Common myeloid progenitor, CD34-positive (primary cell): ENCODE measurements at regions of chr14 and their contacts with region 1.

Region 1: DNA sequence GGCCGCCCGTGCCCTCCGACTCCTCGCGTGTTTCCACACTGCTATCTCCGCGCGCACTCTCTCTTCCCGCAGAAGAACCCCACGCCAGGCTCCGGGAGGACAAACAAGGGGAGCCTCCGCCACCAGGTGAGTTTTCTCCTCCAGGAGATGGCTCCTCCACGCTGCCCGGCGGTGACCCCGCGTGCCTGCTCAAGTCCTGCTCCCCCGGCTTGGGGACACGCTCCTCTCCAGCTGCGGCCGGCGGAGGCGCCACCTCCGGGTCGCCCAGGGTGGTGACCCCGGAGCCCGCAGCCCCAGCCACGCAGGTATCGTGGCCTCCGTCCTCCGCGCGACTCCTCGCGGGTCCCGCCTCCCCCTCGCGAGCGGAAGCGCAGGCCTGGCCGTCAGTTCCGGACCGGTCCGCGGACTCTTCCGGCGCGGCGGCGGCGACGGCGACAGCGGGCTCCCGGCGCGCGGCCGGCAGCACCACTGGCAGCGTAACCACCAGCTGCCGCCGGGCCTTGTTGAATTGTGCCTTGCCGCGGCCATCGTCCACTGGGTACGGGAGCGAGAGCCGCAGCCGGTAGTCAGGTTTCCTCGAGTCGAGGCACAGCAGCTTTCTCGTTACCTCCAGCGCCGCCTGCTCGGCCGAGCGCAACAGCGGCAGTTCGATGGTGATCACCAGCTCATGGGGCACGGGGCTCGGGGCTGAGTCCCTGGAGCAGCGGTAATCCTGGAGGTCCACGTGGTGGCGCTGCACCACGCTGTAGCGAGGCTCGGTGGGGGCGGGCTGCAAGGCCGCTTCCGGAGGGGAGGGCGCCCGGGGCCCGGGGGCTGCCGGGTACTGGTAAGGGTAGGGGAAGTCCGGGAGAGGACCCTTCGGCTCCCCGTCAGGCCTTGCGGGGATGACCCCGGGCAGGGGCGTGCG is 1.2 kb downstream of the DNAAF2 start:
- DNase-seq: peak; percentile 96 to 98 (median 98)
- H3K4me3 ChIP-seq: peak overlapping the region; percentile 53 to 98 (median 95)
- H3K27ac ChIP-seq: peak overlapping the region; percentile 90 to 96
- H3K4me1 ChIP-seq: peaks cover 8 to 29% (median 24%) of the 10 kb centered on the region in 4 experiments
- H3K27me3 ChIP-seq: no peaks in the 10 kb centered on the region

Region 2: GRCh38 chr14:49438256-49438770 is 195.6 kb before region 1 on chr14:
- CTCF ChIA-PET with region 1: no interaction called
- POLR2A ChIA-PET with region 1: no interaction called
- DNase-seq: no peak
- H3K4me3 ChIP-seq: no peak overlapping the region
- H3K27ac ChIP-seq: no peak overlapping the region
- H3K4me1 ChIP-seq: no peaks in the 10 kb centered on the region
- H3K27me3 ChIP-seq: no peaks in the 10 kb centered on the region

Region 3: GRCh38 chr14:49585803-49586672 is 47.9 kb before region 1 on chr14 and contains the start of gene RPS29:
- CTCF ChIA-PET with region 1: interaction called, 10 read pairs
- POLR2A ChIA-PET with region 1: interaction called, 3 read pairs
- DNase-seq: peak; percentile 99 to 100 (median 99)
- H3K4me3 ChIP-seq: peak within 1 kb of the TSS; percentile 87 to 100 (median 98)
- H3K27ac ChIP-seq: peak within 1 kb of the TSS; percentile 96 to 98
- H3K4me1 ChIP-seq: peaks cover 13 to 25% (median 16%) of the 10 kb centered on the region in 4 experiments
- H3K27me3 ChIP-seq: no peaks in the 10 kb centered on the region

Region 4: GRCh38 chr14:49598485-49599300 is 35.2 kb before region 1 on chr14 and contains the start of gene LRR1:
- CTCF ChIA-PET with region 1: interaction called, 9 read pairs
- POLR2A ChIA-PET with region 1: interaction called, 13 read pairs
- DNase-seq: peak; percentile 80 to 91 (median 87)
- H3K4me3 ChIP-seq: peak within 1 kb of the TSS; percentile 88 to 98 (median 95)
- H3K27ac ChIP-seq: peak within 1 kb of the TSS; percentile 97 to 99
- H3K4me1 ChIP-seq: peaks cover 18 to 48% (median 32%) of the 10 kb centered on the region in 4 experiments
- H3K27me3 ChIP-seq: no peaks in the 10 kb centered on the region

Region 5: GRCh38 chr14:49620182-49621113 is 13.4 kb before region 1 on chr14 and contains the starts of genes MGAT2 and RPL36AL:
- CTCF ChIA-PET with region 1: interaction called, 26 read pairs
- POLR2A ChIA-PET with region 1: interaction called, 46 read pairs
- DNase-seq: peak; percentile 97
- H3K4me3 ChIP-seq: peak within 1 kb of the TSS; percentile 75 to 99 (median 95)
- H3K27ac ChIP-seq: peak within 1 kb of the TSS; percentile 96 to 99
- H3K4me1 ChIP-seq: peaks cover 17 to 48% (median 35%) of the 10 kb centered on the region in 4 experiments
- H3K27me3 ChIP-seq: no peaks in the 10 kb centered on the region

Region 6: GRCh38 chr14:49767562-49768300 is 133.8 kb after region 1 on chr14 and contains the start of gene KLHDC2:
- CTCF ChIA-PET with region 1: interaction called, 8 read pairs
- POLR2A ChIA-PET with region 1: interaction called, 23 read pairs
- DNase-seq: peak; percentile 89 to 95 (median 92)
- H3K4me3 ChIP-seq: peak within 1 kb of the TSS; percentile 80 to 99 (median 93)
- H3K27ac ChIP-seq: peak within 1 kb of the TSS; percentile 93 to 96
- H3K4me1 ChIP-seq: peaks cover 9 to 32% (median 25%) of the 10 kb centered on the region in 4 experiments
- H3K27me3 ChIP-seq: no peaks in the 10 kb centered on the region